ENCODE measurements at regions of chr22 and their contacts with region 1.

Region 1: GRCh38 chr22:49917974-49918910 is at the starts of genes ALG12 and CRELD2:
- DNase-seq: peak; percentile 97
- H3K4me3 ChIP-seq: peak within 1 kb of the TSS; percentile 99
- H3K27ac ChIP-seq: peak within 1 kb of the TSS; percentile 93
- H3K4me1 ChIP-seq: peaks cover 11% of the 10 kb centered on the region
- H3K27me3 ChIP-seq: no peaks in the 10 kb centered on the region
- CTCF ChIP-seq: no peak
- total RNA-seq, gene ALG12: 18.6 and 19.8 TPM in 2 replicates
- total RNA-seq, gene CRELD2: 54.1 and 54.7 TPM in 2 replicates

Region 2: DNA sequence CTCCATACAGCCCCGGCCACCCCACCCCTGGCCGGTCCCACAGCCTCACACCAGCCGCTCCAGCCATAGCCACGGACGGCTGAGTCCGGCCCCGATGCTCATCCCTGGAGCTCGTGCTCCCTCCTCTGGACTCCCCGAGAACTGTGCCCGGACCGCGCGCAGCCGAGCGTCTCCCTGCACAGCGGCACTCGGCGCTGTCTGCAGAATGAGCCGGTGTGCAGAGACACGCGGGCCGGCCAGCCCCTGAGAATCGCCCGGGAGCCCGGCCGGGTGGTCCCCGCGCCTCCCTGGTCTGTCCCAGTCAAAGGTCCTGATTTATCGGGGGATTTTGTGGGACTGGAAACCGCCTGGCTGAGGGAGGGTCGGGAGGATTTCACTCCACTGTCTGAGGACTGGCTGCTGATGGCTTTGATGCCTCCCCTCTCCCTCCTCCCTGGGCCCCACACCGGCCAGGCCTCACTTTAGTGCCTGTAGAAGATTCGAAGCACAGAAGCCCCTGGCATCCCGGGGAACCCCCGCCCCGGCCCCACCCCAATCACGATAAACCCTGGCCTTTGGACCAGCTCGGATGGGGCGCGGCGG is 193.3 kb before region 1 on chr22:
- CTCF ChIA-PET with region 1: no interaction called
- POLR2A ChIA-PET with region 1: no interaction called
- intact Hi-C with region 1: no loop called
- DNase-seq: peak; percentile 77
- H3K4me3 ChIP-seq: peak overlapping the region; percentile 55
- H3K27ac ChIP-seq: peak overlapping the region; percentile 37
- H3K4me1 ChIP-seq: peaks cover 10% of the 10 kb centered on the region
- H3K27me3 ChIP-seq: peaks cover 32% of the 10 kb centered on the region
- CTCF ChIP-seq: peak; percentile 88

Region 3: DNA sequence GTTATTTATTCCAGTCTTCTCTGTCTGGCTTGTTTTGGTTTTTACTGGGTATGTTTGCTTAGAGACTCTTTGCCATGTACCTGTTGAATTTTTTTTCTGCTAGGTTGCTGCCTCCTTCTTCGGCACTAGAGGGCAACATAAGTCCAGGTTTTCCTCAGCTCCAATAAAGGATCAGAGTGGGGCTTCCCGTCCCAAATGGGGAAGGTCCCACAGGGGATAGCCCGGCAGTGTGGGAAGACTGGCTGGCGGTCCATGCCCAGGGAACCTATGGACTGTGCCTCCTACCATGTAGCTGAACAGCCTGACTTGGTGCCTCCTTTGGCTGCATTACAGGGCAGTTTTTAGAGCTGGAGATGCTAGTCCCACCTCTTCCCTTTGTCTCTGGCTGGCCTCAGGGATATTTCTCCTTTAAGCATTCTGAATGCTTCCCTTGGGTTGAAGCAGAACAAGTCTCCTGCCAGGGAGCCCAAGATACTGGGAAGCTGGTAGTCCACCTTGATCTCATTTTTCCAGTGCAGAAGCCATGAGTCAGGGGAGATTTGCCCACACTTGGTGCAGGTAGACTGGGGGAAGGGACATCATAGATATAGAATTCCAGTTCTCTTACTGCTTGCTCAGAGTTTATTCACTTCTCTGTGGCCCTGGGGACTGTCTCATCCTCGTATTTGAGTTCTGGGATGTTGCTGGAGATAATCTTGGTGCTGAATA is 150.7 kb before region 1 on chr22:
- CTCF ChIA-PET with region 1: no interaction called
- POLR2A ChIA-PET with region 1: no interaction called
- intact Hi-C with region 1: loop called (anchors 5 kb)
- DNase-seq: peak; percentile 78
- H3K4me3 ChIP-seq: no peak overlapping the region
- H3K27ac ChIP-seq: no peak overlapping the region
- H3K4me1 ChIP-seq: peaks cover 6% of the 10 kb centered on the region
- H3K27me3 ChIP-seq: no peaks in the 10 kb centered on the region
- CTCF ChIP-seq: peak; percentile 87

Region 4: GRCh38 chr22:49783036-49783746 is 135.1 kb before region 1 on chr22:
- CTCF ChIA-PET with region 1: no interaction called
- POLR2A ChIA-PET with region 1: interaction called, 11 read pairs
- intact Hi-C with region 1: no loop called
- DNase-seq: no peak
- H3K4me3 ChIP-seq: no peak overlapping the region
- H3K27ac ChIP-seq: no peak overlapping the region
- H3K4me1 ChIP-seq: peaks cover 21% of the 10 kb centered on the region
- H3K27me3 ChIP-seq: no peaks in the 10 kb centered on the region
- CTCF ChIP-seq: no peak

Region 5: DNA sequence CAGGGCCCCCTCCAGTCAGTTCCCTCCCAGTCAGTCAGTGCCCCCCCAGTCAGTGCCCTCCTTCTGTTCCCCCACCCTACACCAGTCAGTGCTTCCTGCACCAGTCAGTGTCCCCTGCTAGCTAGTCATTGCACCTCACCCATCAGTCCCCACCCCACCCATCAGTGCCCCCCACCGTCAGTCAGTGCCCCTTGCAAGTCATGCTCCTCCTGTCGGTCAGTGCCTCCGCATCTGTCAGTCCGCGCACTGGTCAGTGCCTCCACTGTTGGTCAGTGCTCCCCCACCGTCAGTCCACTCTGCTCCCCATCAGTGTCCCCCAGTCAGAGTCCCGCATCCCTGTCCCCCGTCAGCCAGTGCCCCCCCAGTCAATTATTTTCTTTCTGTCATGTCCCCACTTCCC is 428.2 kb after region 1 on chr22:
- CTCF ChIA-PET with region 1: no interaction called
- POLR2A ChIA-PET with region 1: no interaction called
- intact Hi-C with region 1: no loop called
- DNase-seq: no peak
- H3K4me3 ChIP-seq: no peak overlapping the region
- H3K27ac ChIP-seq: no peak overlapping the region
- H3K4me1 ChIP-seq: peaks cover 3% of the 10 kb centered on the region
- H3K27me3 ChIP-seq: no peaks in the 10 kb centered on the region
- CTCF ChIP-seq: no peak